Caco-2 (cell line): ENCODE measurements at regions of chr1 and their contacts with region 1.

Region 1: GRCh38 chr1:166910396-166910994 is 34.4 kb upstream of the TADA1 start:
- DNase-seq: peak; percentile 77 to 79
- H3K4me3 ChIP-seq: no peak overlapping the region
- H3K4me3 Mint-ChIP-seq: no peak overlapping the region
- H3K27ac Mint-ChIP-seq: no peak overlapping the region
- H3K4me1 ChIP-seq: no peaks in the 10 kb centered on the region
- H3K4me1 Mint-ChIP-seq: no peaks in the 10 kb centered on the region
- H3K27me3 ChIP-seq: no peaks in the 10 kb centered on the region
- H3K27me3 Mint-ChIP-seq: peaks cover 10% of the 10 kb centered on the region
- CTCF ChIP-seq: peak; percentile 80 to 85

Region 2: GRCh38 chr1:166975361-166976129 is 65.0 kb after region 1 on chr1 and contains the start of gene ILDR2:
- CTCF ChIA-PET with region 1: interaction called, 5 read pairs
- POLR2A ChIA-PET with region 1: no interaction called
- intact Hi-C with region 1: loop called (anchors 2 kb)
- DNase-seq: peak; percentile 55 to 57
- H3K4me3 ChIP-seq: peak within 1 kb of the TSS; percentile 70
- H3K4me3 Mint-ChIP-seq: peak within 1 kb of the TSS; percentile 57
- H3K27ac Mint-ChIP-seq: no peak within 1 kb of the TSS
- H3K4me1 ChIP-seq: peaks cover 6% of the 10 kb centered on the region; the same call in 1 of the 2 replicates
- H3K4me1 Mint-ChIP-seq: peaks cover 7% of the 10 kb centered on the region
- H3K27me3 ChIP-seq: peaks cover 3% of the 10 kb centered on the region
- H3K27me3 Mint-ChIP-seq: peaks cover 38% of the 10 kb centered on the region
- CTCF ChIP-seq: no peak
- total RNA-seq, gene ILDR2: 0.98 and 1.2 TPM in 2 replicates

Region 3: DNA sequence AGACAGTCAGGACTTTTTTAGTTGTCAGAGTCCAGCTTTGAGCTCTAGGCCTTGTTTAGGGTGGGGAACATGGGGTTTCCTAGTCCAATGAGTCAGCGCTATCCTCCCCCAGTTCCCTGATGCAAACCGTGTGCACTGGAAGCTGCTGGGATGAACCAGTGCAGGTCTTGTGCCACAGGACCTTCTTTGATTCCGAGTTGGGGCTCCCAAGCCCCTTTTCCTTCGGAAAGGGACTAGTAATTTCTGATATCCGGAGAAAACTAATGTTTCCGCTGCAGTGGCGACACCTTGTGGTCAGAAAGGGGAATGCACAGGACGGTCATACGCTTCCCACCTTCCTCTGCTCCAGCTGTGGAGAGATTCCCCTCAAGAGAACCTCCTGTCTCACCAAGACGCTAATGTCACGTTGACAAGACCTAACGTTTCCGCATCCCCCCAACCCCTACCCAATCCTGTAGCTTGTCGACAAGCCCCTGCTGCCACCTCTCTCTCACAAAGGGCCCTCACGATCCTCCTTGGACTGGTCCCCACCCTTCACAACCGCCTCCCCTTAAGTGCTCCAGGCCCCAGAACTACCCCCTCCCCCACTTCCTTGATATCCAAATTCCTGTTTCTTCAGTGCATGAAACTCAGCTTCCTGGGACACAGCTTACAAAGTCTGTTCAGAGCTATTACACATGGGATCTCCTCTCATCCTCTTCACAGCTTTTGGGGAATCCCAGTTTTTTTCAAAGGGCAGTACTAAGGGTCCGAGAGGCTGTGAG is 148.7 kb after region 1 on chr1:
- CTCF ChIA-PET with region 1: interaction called, 186 read pairs
- POLR2A ChIA-PET with region 1: no interaction called
- intact Hi-C with region 1: loop called (anchors 1 kb)
- DNase-seq: peak; percentile 72 to 81
- H3K4me3 ChIP-seq: no peak overlapping the region
- H3K4me3 Mint-ChIP-seq: peak overlapping the region; percentile 44
- H3K27ac Mint-ChIP-seq: no peak overlapping the region
- H3K4me1 ChIP-seq: no peaks in the 10 kb centered on the region; the same call in 1 of the 2 replicates
- H3K4me1 Mint-ChIP-seq: no peaks in the 10 kb centered on the region
- H3K27me3 ChIP-seq: no peaks in the 10 kb centered on the region
- H3K27me3 Mint-ChIP-seq: no peaks in the 10 kb centered on the region
- CTCF ChIP-seq: peak; percentile 90 to 95

Region 4: DNA sequence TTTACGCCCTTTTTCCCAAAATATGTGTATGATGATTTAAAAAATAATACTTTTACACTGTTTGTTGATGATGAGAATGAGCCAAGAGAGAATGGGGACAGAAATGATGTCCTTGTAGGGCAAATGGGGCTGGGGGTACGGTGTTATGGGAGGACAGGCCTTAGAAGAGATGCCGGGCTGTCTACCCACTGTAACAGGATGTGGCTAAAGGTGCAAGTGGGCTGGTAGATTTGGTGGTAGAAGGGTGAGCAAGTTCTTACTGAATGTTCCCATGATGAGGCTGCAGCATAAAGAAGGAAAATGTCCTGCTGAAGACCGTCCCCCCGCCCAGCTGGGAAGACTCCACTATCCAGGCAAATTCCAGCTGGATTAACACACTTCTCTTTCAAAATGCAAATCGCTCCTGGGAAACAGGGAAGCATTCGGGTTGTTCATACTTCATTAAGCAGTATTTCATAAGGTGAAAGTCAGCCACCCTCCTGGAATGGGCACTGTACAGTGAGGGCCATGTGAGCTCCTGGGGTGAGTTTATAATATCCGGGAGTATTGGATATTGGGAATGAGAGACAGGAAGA is 165.7 kb after region 1 on chr1:
- CTCF ChIA-PET with region 1: no interaction called
- POLR2A ChIA-PET with region 1: no interaction called
- intact Hi-C with region 1: no loop called
- DNase-seq: no peak
- H3K4me3 ChIP-seq: no peak overlapping the region
- H3K4me3 Mint-ChIP-seq: no peak overlapping the region
- H3K27ac Mint-ChIP-seq: no peak overlapping the region
- H3K4me1 ChIP-seq: no peaks in the 10 kb centered on the region
- H3K4me1 Mint-ChIP-seq: no peaks in the 10 kb centered on the region
- H3K27me3 ChIP-seq: no peaks in the 10 kb centered on the region
- H3K27me3 Mint-ChIP-seq: no peaks in the 10 kb centered on the region
- CTCF ChIP-seq: no peak